Cardiac septum (tissue), 1 donor: ENCODE measurements at regions of chr14 and their contacts with region 1.

Region 1: GRCh38 chr14:25049568-25050268 is at the start of gene STXBP6:
- DNase-seq: peak; percentile 86
- total RNA-seq, gene STXBP6: 13.9 TPM

Region 2: DNA sequence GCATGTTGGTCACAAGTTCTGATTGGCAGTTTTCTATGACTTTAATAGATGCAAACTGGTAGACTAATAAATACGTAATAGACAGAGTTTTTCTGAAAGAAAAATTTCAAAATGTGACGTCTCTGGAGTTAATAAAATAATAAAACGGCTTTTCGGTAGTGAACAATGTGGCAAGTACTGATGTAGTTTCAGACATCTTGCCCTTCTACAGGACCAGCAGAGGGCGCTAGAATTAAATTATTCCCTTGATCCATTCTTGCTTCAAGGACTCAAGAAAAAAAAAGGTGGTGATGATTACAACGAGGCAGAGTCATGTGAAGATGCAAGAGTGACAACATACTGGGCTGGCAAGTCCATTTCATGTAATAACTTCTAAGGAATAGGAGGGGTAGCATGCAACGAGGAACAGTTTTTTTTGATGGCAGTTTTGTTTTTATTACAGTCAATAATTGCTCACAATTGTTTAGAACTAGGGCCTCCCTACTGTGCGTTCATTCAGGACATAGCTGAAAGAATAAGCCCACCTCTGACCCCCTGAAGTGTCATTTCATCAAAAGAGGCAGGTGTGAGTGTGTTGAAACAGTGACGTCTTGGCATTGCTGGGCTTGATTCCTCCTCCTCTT is 314.7 kb before region 1 on chr14:
- intact Hi-C with region 1: loop called (anchors 10 kb)
- DNase-seq: no peak

Region 3: GRCh38 chr14:24817212-24818057 is 232.3 kb before region 1 on chr14:
- intact Hi-C with region 1: loop called (anchors 5 kb)
- DNase-seq: no peak

Region 4: DNA sequence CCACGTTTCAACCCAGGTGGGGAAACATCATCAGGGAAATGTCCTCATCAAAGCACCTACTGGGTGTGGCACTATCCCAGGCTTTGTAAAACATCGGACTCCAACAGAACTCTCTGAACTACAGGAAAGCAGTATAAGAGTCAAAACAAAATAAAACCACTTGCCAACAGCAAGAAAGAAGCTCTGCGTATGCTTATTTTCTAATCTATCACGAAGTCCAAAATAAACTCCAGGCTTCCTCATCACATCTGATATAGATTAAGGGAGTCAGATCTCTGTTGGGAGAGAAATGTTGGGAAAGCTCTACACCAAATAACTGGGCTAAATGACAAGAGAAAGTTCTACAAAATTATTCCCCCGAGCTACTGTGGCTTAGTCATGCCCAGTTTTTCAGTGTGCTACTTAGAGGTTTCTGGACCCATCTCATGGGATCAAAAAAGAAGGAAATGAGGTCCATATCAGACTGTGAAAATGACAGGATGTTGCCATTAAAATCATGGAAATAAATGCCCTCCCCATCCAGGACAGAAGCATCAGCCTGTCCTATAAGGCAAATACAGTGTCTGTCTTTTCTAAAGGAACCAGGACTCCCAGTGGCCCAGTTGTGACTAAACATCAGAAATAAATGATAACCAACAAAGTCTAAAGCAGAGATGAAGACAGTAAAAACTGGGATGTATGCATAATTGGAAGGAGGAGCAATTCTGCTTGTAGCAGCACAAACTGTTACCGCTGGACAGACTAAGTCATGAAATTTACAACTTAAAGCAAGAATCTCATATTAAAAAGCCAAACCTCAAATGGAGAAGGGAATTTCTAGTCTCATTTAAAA is 149.2 kb before region 1 on chr14:
- intact Hi-C with region 1: loop called (anchors 10 kb)
- DNase-seq: no peak

Region 5: DNA sequence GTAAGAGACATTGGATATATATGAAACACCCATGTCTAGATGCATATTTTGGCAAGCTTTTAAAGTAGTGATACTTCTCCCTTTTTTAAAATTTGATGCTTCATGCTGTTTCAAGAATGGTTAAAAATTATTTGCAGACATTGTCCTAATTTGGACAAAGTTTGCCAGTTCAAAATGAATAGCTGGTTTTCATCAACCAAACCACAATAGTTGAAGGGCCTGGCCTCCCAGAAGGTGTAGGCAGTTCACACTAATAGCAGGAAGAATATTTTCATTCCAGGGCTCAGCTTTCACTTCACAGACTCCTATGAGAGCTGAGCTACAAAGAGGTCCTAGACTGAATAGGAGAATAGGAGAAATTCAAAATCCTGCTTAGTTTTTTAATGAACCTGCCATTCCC is 78.5 kb before region 1 on chr14:
- intact Hi-C with region 1: loop called (anchors 5 kb)
- DNase-seq: no peak

Region 6: GRCh38 chr14:25132732-25133422 is 83.2 kb after region 1 on chr14:
- intact Hi-C with region 1: loop called (anchors 5 kb)
- DNase-seq: peak; percentile 80